ENCODE measurements at regions of chr1 and their contacts with region 1.

Region 1: DNA sequence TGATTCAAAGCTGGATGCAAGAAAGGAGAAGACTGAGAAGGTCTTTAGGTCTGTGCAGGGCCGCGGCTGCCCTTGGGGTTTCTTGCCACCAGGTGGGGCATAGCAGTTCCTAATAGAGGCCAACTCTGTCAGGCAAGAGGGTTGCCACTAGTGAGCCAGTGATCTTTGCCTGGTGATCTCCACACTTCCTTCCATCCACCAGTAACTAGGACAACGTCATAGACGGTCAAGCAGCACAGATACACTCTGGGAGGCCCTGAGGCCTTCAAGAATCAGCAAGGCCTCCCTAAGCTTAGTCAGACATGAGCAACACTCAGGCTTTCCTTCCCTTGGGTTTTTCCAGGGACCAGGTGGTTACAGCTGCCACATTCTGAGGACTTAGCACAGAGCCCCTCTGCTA is 32.9 kb upstream of the ATP2B4 start:
- DNase-seq: no peak
- ATAC-seq: no peak
- H3K4me3 ChIP-seq: no peak overlapping the region
- H3K27ac ChIP-seq: no peak overlapping the region
- H3K4me1 ChIP-seq: no peaks in the 10 kb centered on the region
- H3K27me3 ChIP-seq: no peaks in the 10 kb centered on the region
- CTCF ChIP-seq: peak; percentile 8 to 34 (median 22)
- POLR2A ChIP-seq: no peak

Region 2: GRCh38 chr1:203520315-203520714 is 73.4 kb before region 1 on chr1:
- in situ Hi-C with region 1: no loop called
- intact Hi-C with region 1: loop called (anchors 10 kb)
- DNase-seq: no peak
- ATAC-seq: peak in 1 of 2 donors; percentile 28
- H3K4me3 ChIP-seq: no peak overlapping the region
- H3K27ac ChIP-seq: no peak overlapping the region
- H3K4me1 ChIP-seq: peaks cover 0 to 7% of the 10 kb centered on the region in 2 donors
- H3K27me3 ChIP-seq: no peaks in the 10 kb centered on the region
- CTCF ChIP-seq: no peak
- POLR2A ChIP-seq: no peak